MCF 10A (cell line): ENCODE measurements at regions of chr16 and their contacts with region 1.

Region 1: DNA sequence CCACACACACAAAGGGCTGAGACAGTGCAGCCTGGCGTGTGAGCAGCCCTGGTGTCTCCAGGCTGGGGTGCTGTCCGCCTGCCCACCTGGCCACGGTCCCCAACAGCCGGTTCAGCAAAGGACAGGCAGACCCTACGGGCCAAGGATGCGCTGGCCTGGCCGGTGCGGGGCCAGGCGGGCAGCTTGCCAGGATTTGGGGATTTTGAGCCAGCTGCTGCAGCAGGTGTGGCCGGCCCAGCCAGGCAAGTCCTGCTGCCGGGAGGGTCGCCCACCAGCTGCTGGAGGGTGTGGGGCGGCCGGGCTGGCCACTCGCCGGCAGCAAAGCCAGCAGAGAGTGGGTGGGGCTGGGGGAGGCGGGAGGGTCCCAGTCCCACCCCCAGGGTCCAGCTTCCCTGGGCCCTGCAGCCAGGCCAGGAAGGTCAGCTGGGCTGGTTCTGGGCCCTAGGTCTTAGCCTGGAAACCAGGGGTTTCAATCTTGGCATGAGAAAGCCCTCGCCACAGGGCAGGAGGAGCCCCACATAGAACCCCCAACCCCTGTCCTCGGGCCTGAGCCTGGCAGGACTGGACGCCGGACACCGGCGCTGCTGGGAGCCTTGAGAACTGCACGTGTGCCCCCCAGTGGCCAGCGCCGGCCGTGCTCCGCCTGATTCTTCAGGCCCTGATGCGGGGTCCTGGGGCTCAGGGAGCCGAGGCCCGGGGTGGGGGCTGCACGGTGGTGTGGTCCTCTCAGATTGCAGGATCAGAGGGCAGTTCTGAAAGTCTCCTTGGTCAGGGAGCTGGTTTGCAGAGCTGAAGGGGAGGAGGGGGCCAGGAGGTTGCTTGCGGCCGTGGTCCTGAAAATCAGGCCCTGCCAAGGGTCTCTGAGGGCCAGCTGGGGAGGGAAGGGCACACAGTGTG is 17.6 kb upstream of the SSTR5 start:
- DNase-seq: peak; percentile 47
- H3K4me3 Mint-ChIP-seq: no peak overlapping the region
- H3K27ac Mint-ChIP-seq: no peak overlapping the region
- H3K4me1 Mint-ChIP-seq: no peaks in the 10 kb centered on the region
- H3K27me3 Mint-ChIP-seq: no peaks in the 10 kb centered on the region
- CTCF ChIP-seq: peak; percentile 88

Region 2: DNA sequence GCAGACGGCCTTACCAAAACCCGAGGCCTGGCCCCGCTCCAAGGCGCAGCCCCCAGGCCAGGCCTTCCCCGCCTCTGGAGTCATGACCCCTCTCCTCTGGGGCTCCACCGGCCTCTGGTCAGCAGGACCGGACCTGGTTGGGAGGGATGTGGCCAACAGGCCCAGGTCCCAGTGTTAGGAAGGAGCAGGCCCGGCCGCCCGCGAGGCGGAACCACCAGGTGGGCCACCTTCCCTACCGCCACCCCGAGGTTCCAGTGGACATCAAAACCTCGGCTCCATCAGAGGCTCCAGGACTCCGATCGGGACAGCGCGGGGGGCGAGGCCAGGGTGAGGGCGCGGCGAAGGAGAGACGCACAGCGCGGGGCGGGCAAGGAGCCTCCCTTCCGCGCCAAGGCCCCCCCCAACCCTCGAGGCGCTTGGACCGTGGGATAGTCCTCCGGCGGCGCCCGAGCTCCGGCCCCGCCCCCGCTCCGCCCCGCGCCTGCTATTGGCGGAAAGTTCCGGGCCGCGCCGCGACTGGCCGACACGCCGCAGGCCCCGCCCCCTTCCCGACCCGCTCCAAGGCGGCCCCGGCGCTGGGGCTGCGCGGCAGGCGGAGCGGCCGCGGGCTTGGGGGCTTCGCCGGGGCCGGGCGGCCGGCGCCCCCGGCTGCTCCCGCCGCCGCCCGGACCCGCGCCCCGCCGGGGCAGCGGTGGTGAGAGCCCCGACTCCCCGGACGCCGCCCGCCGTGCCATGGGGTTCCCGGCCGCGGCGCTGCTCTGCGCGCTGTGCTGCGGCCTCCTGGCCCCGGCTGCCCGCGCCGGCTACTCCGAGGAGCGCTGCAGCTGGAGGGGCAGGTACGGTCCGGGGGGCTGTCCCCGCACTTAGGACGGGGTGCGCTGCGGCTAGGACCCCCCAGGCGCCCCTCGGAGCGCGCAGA is 340.1 kb before region 1 on chr16 and contains the start of gene METRN:
- CTCF ChIA-PET with region 1: interaction called, 34 read pairs
- POLR2A ChIA-PET with region 1: no interaction called
- intact Hi-C with region 1: loop called (anchors 2 kb)
- DNase-seq: peak; percentile 83
- H3K4me3 Mint-ChIP-seq: peak within 1 kb of the TSS; percentile 76
- H3K27ac Mint-ChIP-seq: peak within 1 kb of the TSS; percentile 16
- H3K4me1 Mint-ChIP-seq: peaks cover 21% of the 10 kb centered on the region
- H3K27me3 Mint-ChIP-seq: no peaks in the 10 kb centered on the region
- CTCF ChIP-seq: no peak
- total RNA-seq, gene METRN: 56.3 and 69.5 TPM in 2 replicates

Region 3: GRCh38 chr16:813204-813915 is 241.5 kb before region 1 on chr16:
- CTCF ChIA-PET with region 1: interaction called, 10 read pairs
- POLR2A ChIA-PET with region 1: no interaction called
- intact Hi-C with region 1: loop called (anchors 2 kb)
- DNase-seq: no peak
- H3K4me3 Mint-ChIP-seq: no peak overlapping the region
- H3K27ac Mint-ChIP-seq: no peak overlapping the region
- H3K4me1 Mint-ChIP-seq: no peaks in the 10 kb centered on the region
- H3K27me3 Mint-ChIP-seq: peaks cover 29% of the 10 kb centered on the region
- CTCF ChIP-seq: peak; percentile 55

Region 4: GRCh38 chr16:1069154-1069553 is 14.2 kb after region 1 on chr16:
- CTCF ChIA-PET with region 1: interaction called, 13 read pairs
- POLR2A ChIA-PET with region 1: interaction called, 3 read pairs
- intact Hi-C with region 1: no loop called
- DNase-seq: no peak
- H3K4me3 Mint-ChIP-seq: no peak overlapping the region
- H3K27ac Mint-ChIP-seq: no peak overlapping the region
- H3K4me1 Mint-ChIP-seq: no peaks in the 10 kb centered on the region
- H3K27me3 Mint-ChIP-seq: peaks cover 41% of the 10 kb centered on the region
- CTCF ChIP-seq: no peak

Region 5: GRCh38 chr16:1100084-1100800 is 45.3 kb after region 1 on chr16:
- CTCF ChIA-PET with region 1: interaction called, 10 read pairs
- POLR2A ChIA-PET with region 1: no interaction called
- intact Hi-C with region 1: loop called (anchors 1 kb)
- DNase-seq: no peak
- H3K4me3 Mint-ChIP-seq: no peak overlapping the region
- H3K27ac Mint-ChIP-seq: no peak overlapping the region
- H3K4me1 Mint-ChIP-seq: no peaks in the 10 kb centered on the region
- H3K27me3 Mint-ChIP-seq: peaks cover 15% of the 10 kb centered on the region
- CTCF ChIP-seq: no peak

Region 6: DNA sequence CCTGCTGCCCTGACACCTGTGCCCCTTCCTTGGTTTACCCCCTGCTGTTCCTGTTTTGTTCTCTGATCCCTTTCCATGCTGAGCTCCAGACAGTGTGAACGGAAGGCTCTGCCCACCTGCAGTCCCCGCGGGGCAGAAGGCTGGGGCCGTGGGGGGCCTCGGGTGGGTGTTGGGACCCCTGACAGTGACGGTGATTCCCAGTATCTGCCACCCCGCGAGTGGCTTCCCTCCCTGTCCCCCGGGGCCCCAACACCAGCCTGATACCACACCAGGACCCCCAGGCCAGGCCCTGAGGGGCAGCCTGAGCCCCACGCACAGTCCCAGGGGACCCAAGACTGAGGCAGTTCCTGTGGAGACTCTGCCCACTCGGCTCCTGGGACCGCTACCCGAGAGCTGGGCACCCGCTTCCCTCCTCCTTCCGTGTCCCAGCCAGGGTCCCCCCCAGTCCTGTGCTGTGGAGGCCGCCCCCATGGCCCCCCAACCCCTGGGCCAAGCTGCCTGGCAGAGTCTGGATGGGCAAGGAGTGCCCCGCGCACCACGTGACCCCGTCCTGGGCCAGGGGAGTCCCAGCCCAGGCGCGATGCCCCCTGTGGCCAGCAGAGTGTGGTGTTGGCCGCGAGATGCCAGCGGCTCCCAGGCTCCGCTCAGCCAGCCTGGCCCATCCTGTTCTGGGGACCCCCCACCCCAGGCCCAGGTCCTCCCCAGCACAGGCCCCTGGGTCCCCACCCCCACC is 51.1 kb after region 1 on chr16:
- CTCF ChIA-PET with region 1: interaction called, 10 read pairs
- POLR2A ChIA-PET with region 1: no interaction called
- intact Hi-C with region 1: loop called (anchors 1 kb)
- DNase-seq: peak; percentile 63
- H3K4me3 Mint-ChIP-seq: no peak overlapping the region
- H3K27ac Mint-ChIP-seq: no peak overlapping the region
- H3K4me1 Mint-ChIP-seq: no peaks in the 10 kb centered on the region
- H3K27me3 Mint-ChIP-seq: peaks cover 72% of the 10 kb centered on the region
- CTCF ChIP-seq: peak; percentile 98